ENCODE measurements at regions of chr5 and their contacts with region 1.

Region 1: GRCh38 chr5:160787240-160787639 is 64.8 kb downstream of the ATP10B start:
- DNase-seq: peak; percentile 9
- ATAC-seq: peak; percentile 86
- H3K4me3 ChIP-seq: no peak overlapping the region
- H3K27ac ChIP-seq: no peak overlapping the region
- H3K4me1 ChIP-seq: no peaks in the 10 kb centered on the region
- H3K27me3 ChIP-seq: no peaks in the 10 kb centered on the region
- CTCF ChIP-seq: peak; percentile 64
- EP300 ChIP-seq: no peak
- POLR2A ChIP-seq: no peak
- RAD21 ChIP-seq: peak; percentile 44; the same call in 1 of the 2 replicates

Region 2: DNA sequence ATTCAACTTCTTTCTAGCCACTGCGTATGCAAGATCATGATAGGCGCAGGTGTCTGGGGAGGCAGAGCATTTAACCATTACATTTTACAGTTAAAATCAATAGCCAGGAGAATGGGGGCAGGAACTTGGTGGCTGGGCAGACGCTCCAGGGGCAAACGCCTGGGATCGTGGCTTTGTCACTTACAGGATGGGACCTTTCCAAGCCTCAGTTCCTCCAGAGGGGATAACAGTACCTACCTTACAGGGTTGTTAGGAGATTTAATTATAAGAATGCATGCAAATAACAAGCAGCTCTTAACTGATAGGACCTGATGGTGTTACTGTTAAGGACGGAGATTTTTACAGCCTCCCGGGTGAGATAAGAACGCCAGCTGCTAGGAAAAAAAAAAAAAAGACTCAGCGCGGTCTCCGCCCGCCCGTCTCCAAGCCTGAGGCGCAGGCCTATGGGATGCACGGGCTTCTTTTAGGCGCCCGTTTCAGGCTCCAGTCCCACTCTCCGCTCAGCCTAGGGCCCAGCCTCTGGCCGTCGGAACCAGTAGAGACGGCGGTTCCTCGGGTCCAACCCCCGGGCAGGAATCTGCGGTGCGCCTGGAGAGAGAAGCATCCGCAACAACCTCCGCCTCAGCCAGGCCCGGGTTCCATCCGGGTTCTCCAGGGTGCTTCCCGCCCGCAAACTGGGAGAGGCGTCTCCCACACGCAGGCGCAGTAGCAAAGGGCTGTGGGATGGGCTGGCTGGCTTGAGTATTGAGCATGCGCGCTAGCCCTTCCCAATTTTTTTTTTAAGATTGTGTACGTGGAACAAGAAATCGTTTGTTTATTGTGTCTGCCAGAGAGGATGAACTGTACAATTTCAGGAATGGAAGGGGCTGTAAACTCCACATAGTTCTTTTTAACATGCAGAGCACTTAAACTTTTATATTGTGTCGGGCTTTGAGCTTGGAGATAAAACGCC is 387.6 kb before region 1 on chr5 and contains the start of gene FAM200C:
- CTCF ChIA-PET with region 1: no interaction called
- POLR2A ChIA-PET with region 1: no interaction called
- in situ Hi-C with region 1: no loop called
- intact Hi-C with region 1: no loop called
- DNase-seq: peak; percentile 90
- ATAC-seq: peak; percentile 98
- H3K4me3 ChIP-seq: peak within 1 kb of the TSS; percentile 65 to 90 (median 83)
- H3K27ac ChIP-seq: peak within 1 kb of the TSS; percentile 89
- H3K4me1 ChIP-seq: peaks cover 20% of the 10 kb centered on the region
- H3K27me3 ChIP-seq: no peaks in the 10 kb centered on the region; a peak in 1 of 5 replicates
- CTCF ChIP-seq: no peak
- EP300 ChIP-seq: no peak
- POLR2A ChIP-seq: peak; percentile 94 to 96
- RAD21 ChIP-seq: no peak
- total RNA-seq, gene FAM200C: 4.7 and 6.4 TPM in 2 replicates

Region 3: GRCh38 chr5:160508780-160509361 is 278.4 kb before region 1 on chr5:
- CTCF ChIA-PET with region 1: no interaction called
- POLR2A ChIA-PET with region 1: no interaction called
- in situ Hi-C with region 1: loop called (anchors 25 kb)
- intact Hi-C with region 1: loop called (anchors 2 kb)
- DNase-seq: peak; percentile 76
- ATAC-seq: peak; percentile 89
- H3K4me3 ChIP-seq: no peak overlapping the region
- H3K27ac ChIP-seq: no peak overlapping the region
- H3K4me1 ChIP-seq: peaks cover 52% of the 10 kb centered on the region
- H3K27me3 ChIP-seq: no peaks in the 10 kb centered on the region; a peak in 1 of 5 replicates
- CTCF ChIP-seq: peak; percentile 92
- EP300 ChIP-seq: no peak
- POLR2A ChIP-seq: no peak
- RAD21 ChIP-seq: peak; percentile 88

Region 4: DNA sequence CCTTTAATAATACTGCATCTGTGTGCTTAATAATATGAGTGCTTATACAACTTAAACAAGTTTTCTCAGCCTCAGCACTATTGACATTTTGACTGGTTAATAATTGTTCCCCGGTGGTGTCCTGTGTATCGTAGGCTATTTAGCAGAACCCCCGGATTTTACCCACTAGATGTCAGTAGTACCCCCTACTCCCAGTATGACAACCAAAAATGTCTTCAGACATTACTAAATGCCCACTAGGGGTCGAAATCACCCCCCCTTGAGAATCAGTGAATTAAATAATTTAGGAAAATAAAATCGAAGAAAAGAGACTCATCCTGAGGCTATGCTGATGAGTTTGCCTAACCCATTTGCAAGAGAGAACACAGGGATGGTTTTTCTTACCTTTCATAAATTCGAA is 101.5 kb before region 1 on chr5:
- CTCF ChIA-PET with region 1: no interaction called
- POLR2A ChIA-PET with region 1: no interaction called
- in situ Hi-C with region 1: no loop called
- intact Hi-C with region 1: loop called (anchors 1 kb)
- DNase-seq: peak; percentile 45
- ATAC-seq: peak; percentile 92
- H3K4me3 ChIP-seq: no peak overlapping the region
- H3K27ac ChIP-seq: no peak overlapping the region
- H3K4me1 ChIP-seq: no peaks in the 10 kb centered on the region
- H3K27me3 ChIP-seq: no peaks in the 10 kb centered on the region
- CTCF ChIP-seq: peak; percentile 51
- EP300 ChIP-seq: no peak
- POLR2A ChIP-seq: no peak
- RAD21 ChIP-seq: 0 out of 2 replicates have a peak, but pooled peaks have one; percentile 16

Region 5: GRCh38 chr5:160869989-160870521 is 82.8 kb after region 1 on chr5:
- CTCF ChIA-PET with region 1: no interaction called
- POLR2A ChIA-PET with region 1: no interaction called
- in situ Hi-C with region 1: no loop called
- intact Hi-C with region 1: no loop called
- DNase-seq: no peak
- ATAC-seq: no peak
- H3K4me3 ChIP-seq: no peak overlapping the region
- H3K27ac ChIP-seq: no peak overlapping the region
- H3K4me1 ChIP-seq: no peaks in the 10 kb centered on the region
- H3K27me3 ChIP-seq: no peaks in the 10 kb centered on the region
- CTCF ChIP-seq: no peak
- EP300 ChIP-seq: no peak
- POLR2A ChIP-seq: no peak
- RAD21 ChIP-seq: no peak

Measured in HepG2 (cell line).